ENCODE measurements at regions of chr2 and their contacts with region 1.

Region 1: GRCh38 chr2:223837287-223838061 is at the start of gene AP1S3:
- DNase-seq: peak; percentile 83
- H3K4me3 Mint-ChIP-seq: peak within 1 kb of the TSS; percentile 95
- H3K27ac Mint-ChIP-seq: peak within 1 kb of the TSS; percentile 63
- H3K4me1 Mint-ChIP-seq: peaks cover 22% of the 10 kb centered on the region
- H3K27me3 Mint-ChIP-seq: no peaks in the 10 kb centered on the region
- CTCF ChIP-seq: no peak
- total RNA-seq, gene AP1S3: 56.9 and 57.7 TPM in 2 replicates

Region 2: DNA sequence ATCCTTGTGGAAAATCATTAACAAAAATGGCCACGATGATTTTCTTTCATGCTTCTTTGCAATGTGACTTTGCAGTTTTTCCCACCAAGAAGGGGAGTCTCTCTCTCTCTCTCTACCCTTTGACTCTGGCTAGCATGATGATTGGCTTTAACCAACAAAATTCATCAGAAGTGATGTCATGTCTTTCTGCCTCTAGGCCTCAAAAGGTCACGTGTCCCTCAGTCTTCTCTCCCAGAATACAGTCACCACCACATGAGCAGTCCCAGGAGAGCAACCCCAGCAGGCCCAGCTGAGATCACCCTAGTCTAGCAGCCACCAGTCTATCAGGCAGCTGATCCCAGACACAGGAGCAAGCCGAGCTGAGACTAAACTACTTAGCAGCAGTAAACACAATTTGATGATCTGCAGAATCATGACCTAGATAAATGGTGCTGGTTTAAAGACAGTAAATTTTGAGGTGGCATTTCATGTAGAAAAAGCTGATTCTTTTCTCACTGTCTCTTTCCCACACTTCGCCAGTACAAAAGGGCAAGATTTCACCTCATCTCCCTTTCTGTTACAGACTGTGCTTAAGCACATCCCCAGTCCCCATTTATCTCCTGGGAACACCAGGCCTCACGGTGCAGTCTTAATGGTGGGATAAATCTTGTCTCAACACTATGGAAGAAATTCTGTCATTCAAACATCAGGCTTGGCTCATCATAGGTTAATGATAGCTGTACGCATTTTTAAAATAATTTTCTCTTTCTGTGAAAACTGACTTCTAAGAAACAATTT is 368.0 kb before region 1 on chr2:
- CTCF ChIA-PET with region 1: no interaction called
- POLR2A ChIA-PET with region 1: no interaction called
- intact Hi-C with region 1: no loop called
- DNase-seq: peak; percentile 33
- H3K4me3 Mint-ChIP-seq: no peak overlapping the region
- H3K27ac Mint-ChIP-seq: no peak overlapping the region
- H3K4me1 Mint-ChIP-seq: peaks cover 28% of the 10 kb centered on the region
- H3K27me3 Mint-ChIP-seq: no peaks in the 10 kb centered on the region
- CTCF ChIP-seq: no peak

Region 3: GRCh38 chr2:223822818-223823217 is 14.7 kb before region 1 on chr2:
- CTCF ChIA-PET with region 1: interaction called, 5 read pairs
- POLR2A ChIA-PET with region 1: interaction called, 19 read pairs
- intact Hi-C with region 1: no loop called
- DNase-seq: no peak
- H3K4me3 Mint-ChIP-seq: no peak overlapping the region
- H3K27ac Mint-ChIP-seq: no peak overlapping the region
- H3K4me1 Mint-ChIP-seq: peaks cover 25% of the 10 kb centered on the region
- H3K27me3 Mint-ChIP-seq: no peaks in the 10 kb centered on the region
- CTCF ChIP-seq: no peak

Region 4: GRCh38 chr2:223944703-223945531 is 107.4 kb after region 1 on chr2 and contains the start of gene WDFY1:
- CTCF ChIA-PET with region 1: interaction called, 4 read pairs
- POLR2A ChIA-PET with region 1: interaction called, 4 read pairs
- intact Hi-C with region 1: loop called (anchors 5 kb)
- DNase-seq: peak; percentile 79
- H3K4me3 Mint-ChIP-seq: peak within 1 kb of the TSS; percentile 96
- H3K27ac Mint-ChIP-seq: peak within 1 kb of the TSS; percentile 90
- H3K4me1 Mint-ChIP-seq: peaks cover 30% of the 10 kb centered on the region
- H3K27me3 Mint-ChIP-seq: no peaks in the 10 kb centered on the region
- CTCF ChIP-seq: no peak
- total RNA-seq, gene WDFY1: 36.9 and 41.8 TPM in 2 replicates

Region 5: GRCh38 chr2:224507789-224508188 is 670.3 kb after region 1 on chr2:
- CTCF ChIA-PET with region 1: no interaction called
- POLR2A ChIA-PET with region 1: no interaction called
- intact Hi-C with region 1: no loop called
- DNase-seq: no peak
- H3K4me3 Mint-ChIP-seq: no peak overlapping the region
- H3K27ac Mint-ChIP-seq: no peak overlapping the region
- H3K4me1 Mint-ChIP-seq: no peaks in the 10 kb centered on the region
- H3K27me3 Mint-ChIP-seq: no peaks in the 10 kb centered on the region
- CTCF ChIP-seq: no peak